ENCODE measurements at regions of chr9 and their contacts with region 1.

Region 1: GRCh38 chr9:131590908-131591844 is 45.9 kb downstream of the PRRT1B start:
- DNase-seq: peak; percentile 77
- H3K4me3 Mint-ChIP-seq: no peak overlapping the region
- H3K27ac Mint-ChIP-seq: no peak overlapping the region
- H3K4me1 Mint-ChIP-seq: peaks cover 4% of the 10 kb centered on the region
- H3K27me3 Mint-ChIP-seq: no peaks in the 10 kb centered on the region
- CTCF ChIP-seq: peak; percentile 80

Region 2: GRCh38 chr9:131457746-131458145 is 133.4 kb before region 1 on chr9:
- CTCF ChIA-PET with region 1: no interaction called
- POLR2A ChIA-PET with region 1: no interaction called
- intact Hi-C with region 1: no loop called
- DNase-seq: no peak
- H3K4me3 Mint-ChIP-seq: no peak overlapping the region
- H3K27ac Mint-ChIP-seq: peak overlapping the region; percentile 52
- H3K4me1 Mint-ChIP-seq: peaks cover 6% of the 10 kb centered on the region
- H3K27me3 Mint-ChIP-seq: no peaks in the 10 kb centered on the region
- CTCF ChIP-seq: no peak

Region 3: GRCh38 chr9:131517761-131518190 is 73.4 kb before region 1 on chr9:
- CTCF ChIA-PET with region 1: no interaction called
- POLR2A ChIA-PET with region 1: no interaction called
- intact Hi-C with region 1: no loop called
- DNase-seq: no peak
- H3K4me3 Mint-ChIP-seq: no peak overlapping the region
- H3K27ac Mint-ChIP-seq: no peak overlapping the region
- H3K4me1 Mint-ChIP-seq: no peaks in the 10 kb centered on the region
- H3K27me3 Mint-ChIP-seq: no peaks in the 10 kb centered on the region
- CTCF ChIP-seq: no peak

Region 4: DNA sequence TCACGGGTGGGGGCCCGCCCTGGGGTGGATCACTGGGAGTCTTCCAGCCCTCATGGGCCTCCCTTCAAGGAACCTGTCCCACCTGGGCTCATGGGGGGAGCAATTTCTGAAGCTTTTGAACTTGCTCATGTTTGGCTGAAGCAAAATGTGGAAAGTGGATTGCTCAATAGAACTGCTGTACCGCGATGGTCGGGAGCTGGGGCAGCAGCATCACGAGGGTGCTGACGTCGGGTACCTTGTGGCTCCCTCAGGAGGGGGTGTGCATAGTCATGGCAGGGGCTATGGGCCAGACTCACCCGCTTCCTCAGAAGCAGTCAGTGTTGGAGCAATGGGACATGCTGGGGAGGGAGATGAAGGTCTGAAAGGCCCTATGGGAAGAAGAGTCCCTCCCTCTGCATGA is 12.0 kb after region 1 on chr9:
- CTCF ChIA-PET with region 1: interaction called, 11 read pairs
- POLR2A ChIA-PET with region 1: interaction called, 6 read pairs
- intact Hi-C with region 1: no loop called
- DNase-seq: no peak
- H3K4me3 Mint-ChIP-seq: no peak overlapping the region
- H3K27ac Mint-ChIP-seq: no peak overlapping the region
- H3K4me1 Mint-ChIP-seq: peaks cover 2% of the 10 kb centered on the region
- H3K27me3 Mint-ChIP-seq: no peaks in the 10 kb centered on the region
- CTCF ChIP-seq: no peak

Region 5: GRCh38 chr9:131608493-131609037 is 17.4 kb after region 1 on chr9:
- CTCF ChIA-PET with region 1: interaction called, 11 read pairs
- POLR2A ChIA-PET with region 1: interaction called, 6 read pairs
- intact Hi-C with region 1: no loop called
- DNase-seq: peak; percentile 84
- H3K4me3 Mint-ChIP-seq: peak overlapping the region; percentile 54
- H3K27ac Mint-ChIP-seq: peak overlapping the region; percentile 73
- H3K4me1 Mint-ChIP-seq: peaks cover 29% of the 10 kb centered on the region
- H3K27me3 Mint-ChIP-seq: no peaks in the 10 kb centered on the region
- CTCF ChIP-seq: no peak

Region 6: GRCh38 chr9:131747356-131747755 is 156.2 kb after region 1 on chr9:
- CTCF ChIA-PET with region 1: interaction called, 151 read pairs
- POLR2A ChIA-PET with region 1: interaction called, 4 read pairs
- intact Hi-C with region 1: loop called (anchors 1 kb)
- DNase-seq: peak; percentile 58
- H3K4me3 Mint-ChIP-seq: no peak overlapping the region
- H3K27ac Mint-ChIP-seq: no peak overlapping the region
- H3K4me1 Mint-ChIP-seq: peaks cover 4% of the 10 kb centered on the region
- H3K27me3 Mint-ChIP-seq: peaks cover 11% of the 10 kb centered on the region
- CTCF ChIP-seq: peak; percentile 65

Measured in MCF 10A (cell line).